ENCODE measurements at regions of chr13 and their contacts with region 1.

Region 1: DNA sequence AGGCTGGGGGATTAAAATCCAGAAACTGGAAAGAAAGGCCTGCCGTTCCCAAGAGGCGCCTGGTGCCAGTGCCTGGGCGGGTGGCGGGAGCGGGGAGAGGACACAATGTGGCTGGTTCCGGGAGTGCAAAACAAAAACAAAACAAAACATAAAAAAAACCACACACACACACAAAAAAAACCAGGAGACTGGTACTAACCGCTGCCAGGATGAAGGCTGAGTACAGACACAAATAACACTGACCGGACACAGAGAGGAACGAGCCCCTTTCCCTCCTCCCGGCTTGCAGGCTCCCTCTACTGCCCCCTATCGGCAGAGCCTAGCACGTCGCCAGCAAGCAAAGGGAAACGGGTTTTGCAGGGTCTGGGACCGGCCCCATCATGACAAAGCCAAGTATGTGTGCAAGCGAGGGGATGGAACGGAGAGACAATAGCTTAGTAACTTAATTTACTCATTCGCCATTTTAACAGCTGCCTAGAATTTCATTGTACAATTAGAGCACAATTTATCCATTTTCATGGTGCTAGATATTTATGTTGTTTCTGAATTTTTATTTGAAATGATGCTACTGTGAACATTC is 17.9 kb upstream of the ZDHHC20 start:
- DNase-seq: peak; percentile 66 to 92 (median 86)
- ATAC-seq: peak; percentile 96
- H3K4me3 ChIP-seq: peak overlapping the region; percentile 4 to 32
- H3K27ac ChIP-seq: peak overlapping the region in 1 of 2 donors; percentile 45
- H3K4me1 ChIP-seq: peaks cover 0 to 16% of the 10 kb centered on the region in 2 donors
- H3K27me3 ChIP-seq: no peaks in the 10 kb centered on the region
- CTCF ChIP-seq: peak; percentile 98

Region 2: DNA sequence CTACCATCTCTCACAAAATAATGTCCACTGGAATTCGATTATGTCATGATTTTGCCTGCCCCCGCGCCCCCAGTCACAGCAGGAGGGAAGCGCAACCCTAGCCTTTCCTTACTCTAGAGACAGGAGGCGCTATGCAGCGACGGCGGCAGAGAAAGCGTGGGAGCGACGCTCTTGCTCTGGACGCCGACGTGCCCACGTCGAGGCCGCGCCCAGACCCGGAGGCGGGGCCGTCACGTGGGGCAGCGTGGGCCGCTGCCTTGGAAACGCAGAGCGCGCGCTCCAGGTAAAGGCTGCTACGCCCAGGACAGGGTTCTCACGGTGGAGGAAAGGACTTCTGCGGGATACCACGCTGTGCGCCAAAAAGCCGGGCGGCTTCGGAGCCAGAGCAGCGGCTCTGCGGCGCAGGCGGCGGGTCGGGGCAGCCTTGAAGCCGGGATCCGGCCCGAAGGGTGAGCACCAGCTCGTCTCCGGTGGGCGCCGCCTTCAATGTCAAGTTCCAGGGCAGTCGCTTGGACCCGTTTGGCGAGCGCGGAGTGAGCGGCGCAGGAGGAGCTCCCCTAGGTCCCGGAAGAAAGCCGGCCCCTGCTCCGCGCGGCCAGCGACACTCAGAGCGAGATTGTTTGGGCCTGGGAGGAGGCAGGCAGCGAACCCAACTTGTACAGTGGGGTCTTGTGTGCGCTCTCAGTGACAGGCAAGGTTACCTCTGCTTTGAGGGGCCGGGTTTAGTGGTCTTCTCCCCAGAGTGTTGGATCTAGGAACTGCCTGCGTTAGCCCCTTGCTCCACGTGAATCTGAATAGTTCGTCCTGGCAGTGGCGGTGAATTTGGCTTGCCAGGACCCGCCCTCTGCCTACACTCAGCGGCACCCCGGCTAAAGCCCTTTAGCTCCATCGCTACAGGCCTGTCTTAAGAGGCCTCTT is 178.8 kb before region 1 on chr13:
- intact Hi-C with region 1: loop called in 1 of 2 experiments (anchors 5 kb)
- DNase-seq: peak; percentile 88 to 96 (median 92)
- ATAC-seq: peak; percentile 99
- H3K4me3 ChIP-seq: peak overlapping the region; percentile 85 to 100
- H3K27ac ChIP-seq: peak overlapping the region; percentile 54 to 75
- H3K4me1 ChIP-seq: peaks cover 12 to 23% of the 10 kb centered on the region in 2 donors
- H3K27me3 ChIP-seq: no peaks in the 10 kb centered on the region
- CTCF ChIP-seq: peak; percentile 87

Measured in left lung (tissue), 14 donors.